ENCODE measurements at regions of chr4 and their contacts with region 1.

Region 1: GRCh38 chr4:24453951-24454350 is 130.4 kb downstream of the DHX15 start:
- DNase-seq: no peak
- H3K4me3 ChIP-seq: no peak overlapping the region
- H3K27ac ChIP-seq: no peak overlapping the region
- H3K4me1 ChIP-seq: no peaks in the 10 kb centered on the region
- H3K27me3 ChIP-seq: no peaks in the 10 kb centered on the region
- CTCF ChIP-seq: no peak
- POLR2A ChIP-seq: no peak

Region 2: DNA sequence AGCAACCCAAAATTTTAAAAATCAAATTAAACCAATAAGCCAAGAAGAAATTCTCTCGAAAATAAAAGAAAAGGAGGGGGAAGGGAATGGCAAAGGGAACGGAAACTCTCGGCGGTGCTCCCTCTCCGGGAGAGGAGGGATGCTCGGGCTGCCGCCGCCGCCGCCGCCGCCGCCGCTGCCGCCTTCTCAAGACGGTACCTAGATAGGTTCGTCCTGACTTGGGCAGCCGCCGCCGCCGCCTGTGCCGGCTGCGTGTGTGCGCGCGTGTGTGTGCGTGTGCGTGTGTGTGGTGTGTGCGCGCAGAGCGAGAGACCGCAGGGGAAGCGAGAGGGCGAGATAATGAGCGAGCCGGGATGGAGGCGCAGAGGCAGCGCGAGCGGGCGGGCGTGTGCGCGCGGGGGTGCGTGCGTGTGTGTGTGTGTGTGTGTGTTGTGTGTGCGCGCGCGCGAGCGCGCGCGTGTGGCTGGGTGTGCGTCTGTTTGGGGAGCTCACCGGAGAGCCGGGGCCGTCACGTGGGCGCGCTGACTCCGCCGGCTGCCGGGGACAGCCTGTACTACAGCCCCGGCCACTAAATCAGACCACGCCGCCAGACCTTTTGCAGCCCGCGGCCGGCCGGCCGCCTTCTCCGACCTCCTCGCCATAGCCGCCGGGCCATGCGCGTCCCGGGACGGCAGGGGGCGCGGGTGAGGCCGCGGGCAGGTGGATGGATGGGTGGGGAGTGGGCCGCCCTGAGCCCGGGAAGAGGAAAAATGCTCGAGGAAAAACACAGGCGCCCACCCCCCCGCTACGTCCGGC is 18.8 kb after region 1 on chr4:
- CTCF ChIA-PET with region 1: interaction called, 11 read pairs
- POLR2A ChIA-PET with region 1: no interaction called
- dilution Hi-C with region 1: no loop called
- intact Hi-C with region 1: no loop called
- DNase-seq: peak; percentile 63
- H3K4me3 ChIP-seq: peak overlapping the region; percentile 19 to 42 (median 33)
- H3K27ac ChIP-seq: no peak overlapping the region
- H3K4me1 ChIP-seq: peaks cover 15% of the 10 kb centered on the region
- H3K27me3 ChIP-seq: peaks cover 34 to 42% of the 10 kb centered on the region in 2 experiments
- CTCF ChIP-seq: peak; percentile 79 to 81
- POLR2A ChIP-seq: no peak

Region 3: GRCh38 chr4:24611575-24611974 is 157.6 kb after region 1 on chr4:
- CTCF ChIA-PET with region 1: no interaction called
- POLR2A ChIA-PET with region 1: no interaction called
- dilution Hi-C with region 1: no loop called
- intact Hi-C with region 1: no loop called
- DNase-seq: no peak
- H3K4me3 ChIP-seq: no peak overlapping the region
- H3K27ac ChIP-seq: no peak overlapping the region
- H3K4me1 ChIP-seq: no peaks in the 10 kb centered on the region
- H3K27me3 ChIP-seq: peaks cover 0 to 1% of the 10 kb centered on the region in 2 experiments
- CTCF ChIP-seq: no peak
- POLR2A ChIP-seq: no peak

Region 4: GRCh38 chr4:24642981-24643547 is 189.1 kb after region 1 on chr4:
- CTCF ChIA-PET with region 1: no interaction called
- POLR2A ChIA-PET with region 1: no interaction called
- dilution Hi-C with region 1: no loop called
- intact Hi-C with region 1: no loop called
- DNase-seq: no peak
- H3K4me3 ChIP-seq: no peak overlapping the region
- H3K27ac ChIP-seq: peak overlapping the region; percentile 35
- H3K4me1 ChIP-seq: peaks cover 18% of the 10 kb centered on the region
- H3K27me3 ChIP-seq: peaks cover 2 to 3% of the 10 kb centered on the region in 2 experiments
- CTCF ChIP-seq: no peak
- POLR2A ChIP-seq: no peak